ENCODE measurements at regions of chr1 and their contacts with region 1.

Region 1: DNA sequence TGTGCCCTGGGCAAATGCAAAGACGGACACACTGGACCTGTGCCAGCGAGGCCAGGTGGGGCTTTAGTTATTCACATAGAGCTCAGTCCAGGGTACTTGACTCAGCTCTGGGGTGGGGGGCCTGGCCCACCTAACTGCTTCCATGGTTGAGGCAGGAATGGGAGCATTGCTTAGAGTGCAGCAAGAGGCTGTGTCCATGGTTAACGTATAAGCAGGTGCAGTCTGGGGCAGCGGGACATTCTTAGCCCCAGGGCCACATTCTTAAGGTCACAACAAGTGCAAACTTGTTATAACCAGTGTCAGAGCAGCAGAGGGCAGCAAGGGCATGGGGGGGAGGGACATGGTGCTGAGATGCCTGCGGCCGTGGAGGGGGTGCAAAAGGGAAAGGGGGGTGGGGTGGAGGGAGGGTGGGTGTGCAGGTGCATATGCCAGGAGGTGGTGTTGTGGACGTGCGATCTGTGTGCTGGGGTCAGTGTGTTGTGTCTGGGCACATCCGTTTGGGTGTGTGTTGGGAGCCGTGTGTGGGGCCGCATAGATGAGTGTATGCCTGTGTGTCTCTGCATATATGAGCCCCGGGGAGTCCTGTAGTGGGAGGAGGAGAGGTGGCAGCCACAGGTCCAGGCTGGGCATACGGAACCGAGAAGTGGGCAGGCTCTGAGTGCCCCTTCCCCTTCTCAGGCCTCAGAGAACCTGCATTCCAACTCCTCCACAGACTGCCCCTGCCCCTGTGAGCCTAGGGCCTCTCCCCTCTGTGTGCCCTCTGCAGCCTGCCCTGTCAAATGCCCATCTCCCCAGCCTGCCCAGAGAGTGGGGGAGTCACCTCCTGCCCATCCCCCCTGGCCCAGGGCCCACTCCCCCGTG is 8.4 kb downstream of the KCNJ10 start:
- DNase-seq: peak in 1 of 2 donors; percentile 70
- H3K4me3 ChIP-seq: no peak overlapping the region
- H3K27ac ChIP-seq: no peak overlapping the region
- H3K4me1 ChIP-seq: no peaks in the 10 kb centered on the region
- H3K27me3 ChIP-seq: peaks cover 0 to 11% of the 10 kb centered on the region in 2 donors
- CTCF ChIP-seq: no peak
- POLR2A ChIP-seq: no peak

Region 2: GRCh38 chr1:160085686-160086455 is 24.3 kb after region 1 on chr1:
- intact Hi-C with region 1: loop called (anchors 1 kb)
- DNase-seq: peak; percentile 49 to 74
- H3K4me3 ChIP-seq: no peak overlapping the region
- H3K27ac ChIP-seq: no peak overlapping the region
- H3K4me1 ChIP-seq: peaks cover 0 to 2% of the 10 kb centered on the region in 2 donors
- H3K27me3 ChIP-seq: peaks cover 0 to 11% of the 10 kb centered on the region in 2 donors
- CTCF ChIP-seq: peak; percentile 41 to 62 (median 53)
- POLR2A ChIP-seq: no peak